ENCODE measurements at regions of chr11 and their contacts with region 1.

Region 1: GRCh38 chr11:68383976-68384501 is 71.6 kb downstream of the LRP5 start:
- DNase-seq: peak; percentile 68
- ATAC-seq: no peak
- H3K4me3 ChIP-seq: no peak overlapping the region
- H3K27ac ChIP-seq: no peak overlapping the region
- H3K4me1 ChIP-seq: peaks cover 26% of the 10 kb centered on the region
- H3K27me3 ChIP-seq: no peaks in the 10 kb centered on the region
- CTCF ChIP-seq: peak; percentile 99

Region 2: DNA sequence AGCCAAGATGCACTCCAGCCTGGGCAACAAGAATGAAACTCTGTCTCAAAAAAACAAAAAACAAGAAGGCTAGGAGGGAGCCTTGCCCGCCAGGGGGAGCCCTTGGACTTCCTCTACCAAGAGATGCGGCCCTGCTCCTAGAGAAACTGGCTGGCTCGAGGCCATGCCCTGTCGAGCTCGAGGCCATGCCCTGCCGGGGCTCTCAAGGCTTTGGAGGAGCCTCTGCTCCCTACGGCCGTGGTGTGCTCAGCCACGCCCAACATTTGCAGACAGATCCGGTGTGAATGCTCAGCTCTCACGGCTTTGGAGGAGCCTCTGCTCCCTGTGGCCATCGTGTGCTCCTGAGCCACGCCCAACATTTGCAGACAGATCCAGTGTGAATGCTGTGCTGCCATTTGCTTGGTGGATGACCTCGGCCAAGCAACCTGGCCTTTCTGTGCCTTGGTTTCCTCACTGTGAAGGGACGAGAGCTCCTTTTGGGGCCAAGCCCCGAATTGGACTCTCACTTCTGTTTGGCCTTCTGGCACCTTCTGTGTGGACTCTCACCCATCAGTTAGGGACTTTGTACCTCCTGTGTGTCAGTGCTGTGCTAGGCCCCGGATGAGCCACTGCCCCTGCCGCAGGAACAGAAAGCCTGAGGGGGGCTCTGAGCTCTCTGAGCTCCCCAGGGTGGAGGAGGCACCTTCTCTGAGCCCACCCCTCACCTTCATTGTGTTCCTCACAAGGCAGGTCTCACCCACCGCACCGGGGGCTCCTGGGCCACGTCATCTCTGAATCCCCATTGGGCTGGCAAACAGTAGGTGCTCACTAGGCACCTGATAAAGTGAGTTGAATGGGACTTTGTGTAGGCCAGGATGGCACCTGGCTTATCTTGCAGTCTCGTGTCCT is 126.3 kb before region 1 on chr11:
- CTCF ChIA-PET with region 1: interaction called, 4 read pairs
- POLR2A ChIA-PET with region 1: no interaction called
- intact Hi-C with region 1: loop called (anchors 5 kb)
- DNase-seq: peak; percentile 96
- ATAC-seq: peak; percentile 89
- H3K4me3 ChIP-seq: peak overlapping the region; percentile 41; the same call in 1 of the 2 replicates
- H3K27ac ChIP-seq: no peak overlapping the region
- H3K4me1 ChIP-seq: peaks cover 5% of the 10 kb centered on the region; the same call in 1 of the 2 replicates
- H3K27me3 ChIP-seq: no peaks in the 10 kb centered on the region
- CTCF ChIP-seq: peak; percentile 90

Region 3: GRCh38 chr11:68271781-68272608 is 112.0 kb before region 1 on chr11 and contains the start of gene C11orf24:
- CTCF ChIA-PET with region 1: no interaction called
- POLR2A ChIA-PET with region 1: interaction called, 9 read pairs
- intact Hi-C with region 1: loop called (anchors 5 kb)
- DNase-seq: peak; percentile 98
- ATAC-seq: peak; percentile 92
- H3K4me3 ChIP-seq: peak within 1 kb of the TSS; percentile 89
- H3K27ac ChIP-seq: peak within 1 kb of the TSS; percentile 76
- H3K4me1 ChIP-seq: peaks cover 22% of the 10 kb centered on the region
- H3K27me3 ChIP-seq: no peaks in the 10 kb centered on the region
- CTCF ChIP-seq: no peak
- total RNA-seq, gene C11orf24: 74.9 and 75.9 TPM in 2 replicates

Region 4: DNA sequence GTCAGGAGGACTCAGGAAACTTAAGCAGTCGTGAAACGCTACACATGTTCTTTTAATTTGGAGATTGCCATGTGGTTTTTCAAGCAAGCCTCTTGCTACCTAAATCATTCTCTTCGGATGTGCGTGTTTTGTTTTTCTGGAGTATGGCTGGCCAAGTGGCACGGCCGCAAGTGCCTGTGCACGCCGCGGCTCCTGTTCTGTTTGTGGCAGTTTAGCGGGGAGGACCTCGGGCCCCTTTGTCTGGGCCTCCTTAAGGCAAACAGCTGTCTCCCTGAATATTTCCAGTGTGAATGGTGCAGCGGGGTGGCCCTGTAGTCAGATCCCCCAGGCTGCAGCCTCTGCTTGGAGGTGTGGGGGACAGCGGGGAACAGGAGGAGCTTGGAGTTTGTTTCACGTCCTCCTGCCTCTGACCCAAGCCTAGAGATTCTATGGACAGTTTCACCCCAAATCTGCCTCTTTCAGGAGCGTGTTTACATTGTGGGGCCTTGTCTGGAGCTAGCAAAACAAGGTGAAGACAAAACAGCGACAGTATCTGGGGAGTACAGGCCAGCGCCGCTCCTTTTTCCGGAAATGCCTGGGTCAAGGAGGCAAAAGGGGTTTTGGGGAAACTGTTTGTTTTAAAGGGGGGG is 70.4 kb before region 1 on chr11:
- CTCF ChIA-PET with region 1: no interaction called
- POLR2A ChIA-PET with region 1: interaction called, 5 read pairs
- intact Hi-C with region 1: loop called (anchors 1 kb)
- DNase-seq: peak; percentile 33
- ATAC-seq: no peak
- H3K4me3 ChIP-seq: peak overlapping the region; percentile 91
- H3K27ac ChIP-seq: peak overlapping the region; percentile 91
- H3K4me1 ChIP-seq: peaks cover 35% of the 10 kb centered on the region
- H3K27me3 ChIP-seq: no peaks in the 10 kb centered on the region
- CTCF ChIP-seq: no peak

Region 5: GRCh38 chr11:68340784-68341544 is 43.1 kb before region 1 on chr11:
- CTCF ChIA-PET with region 1: no interaction called
- POLR2A ChIA-PET with region 1: no interaction called
- intact Hi-C with region 1: loop called (anchors 1 kb)
- DNase-seq: peak; percentile 70
- ATAC-seq: peak; percentile 70
- H3K4me3 ChIP-seq: 0 out of 2 replicates have a peak overlapping the region, but pooled peaks have one; percentile 17
- H3K27ac ChIP-seq: peak overlapping the region; percentile 6; the same call in 1 of the 2 replicates
- H3K4me1 ChIP-seq: peaks cover 32% of the 10 kb centered on the region
- H3K27me3 ChIP-seq: no peaks in the 10 kb centered on the region
- CTCF ChIP-seq: no peak

Region 6: GRCh38 chr11:68354148-68354872 is 29.7 kb before region 1 on chr11:
- CTCF ChIA-PET with region 1: no interaction called
- POLR2A ChIA-PET with region 1: no interaction called
- intact Hi-C with region 1: loop called (anchors 1 kb)
- DNase-seq: peak; percentile 98
- ATAC-seq: peak; percentile 96
- H3K4me3 ChIP-seq: peak overlapping the region; percentile 28; the same call in 1 of the 2 replicates
- H3K27ac ChIP-seq: peak overlapping the region; percentile 87
- H3K4me1 ChIP-seq: peaks cover 29% of the 10 kb centered on the region
- H3K27me3 ChIP-seq: no peaks in the 10 kb centered on the region
- CTCF ChIP-seq: no peak

Region 7: GRCh38 chr11:68436985-68437926 is 53.2 kb after region 1 on chr11:
- CTCF ChIA-PET with region 1: interaction called, 5 read pairs
- POLR2A ChIA-PET with region 1: no interaction called
- intact Hi-C with region 1: loop called (anchors 10 kb)
- DNase-seq: peak; percentile 80
- ATAC-seq: peak; percentile 96
- H3K4me3 ChIP-seq: no peak overlapping the region
- H3K27ac ChIP-seq: no peak overlapping the region
- H3K4me1 ChIP-seq: peaks cover 14% of the 10 kb centered on the region
- H3K27me3 ChIP-seq: no peaks in the 10 kb centered on the region
- CTCF ChIP-seq: no peak

Measured in PC-3 (cell line).